ENCODE measurements at regions of chr2 and their contacts with region 1.

Region 1: DNA sequence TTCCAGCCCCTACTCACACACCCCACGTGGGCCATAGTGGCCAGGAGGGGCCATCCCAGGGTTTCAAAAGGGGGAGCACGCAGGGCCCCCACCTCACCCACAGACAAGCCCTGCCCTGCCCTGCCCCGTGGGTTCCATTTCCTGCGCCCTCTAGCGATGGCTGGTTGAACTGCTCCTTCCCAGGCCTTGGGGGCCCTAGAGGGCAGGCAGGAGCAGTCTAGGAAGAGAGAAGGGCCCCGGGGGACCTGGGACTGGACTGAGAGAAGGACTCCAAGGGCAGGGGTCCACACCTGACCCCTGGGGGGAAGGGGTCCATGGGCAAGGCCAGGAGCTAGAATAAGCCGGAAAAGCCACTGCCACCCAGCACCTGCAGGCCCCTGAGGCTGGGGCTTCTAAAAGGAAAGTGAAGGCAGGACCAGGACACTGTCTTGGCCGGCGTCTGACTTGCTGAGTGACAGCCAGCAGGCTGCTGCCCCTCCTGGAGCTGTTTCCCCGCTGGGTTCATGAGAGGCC is 10.1 kb downstream of the CYP26B1 start:
- DNase-seq: no peak
- H3K4me3 ChIP-seq: no peak overlapping the region
- CTCF ChIP-seq: peak; percentile 98

Region 2: GRCh38 chr2:71801969-71802368 is 335.6 kb before region 1 on chr2:
- in situ Hi-C with region 1: loop called (anchors 25 kb)
- DNase-seq: peak; percentile 27
- H3K4me3 ChIP-seq: no peak overlapping the region
- CTCF ChIP-seq: peak; percentile 51